CD8-positive, alpha-beta T cell (primary cell): ENCODE measurements at regions of chr17 and their contacts with region 1.

Region 1: GRCh38 chr17:16453493-16453851 is 38.1 kb downstream of the TRPV2 start:
- DNase-seq: no peak
- ATAC-seq: no peak
- H3K4me3 ChIP-seq: no peak overlapping the region
- H3K4me3 Mint-ChIP-seq: no peak overlapping the region
- H3K27ac ChIP-seq: no peak overlapping the region
- H3K27ac Mint-ChIP-seq: peak overlapping the region; percentile 55
- H3K4me1 ChIP-seq: no peaks in the 10 kb centered on the region
- H3K4me1 Mint-ChIP-seq: peaks cover 11% of the 10 kb centered on the region
- H3K27me3 ChIP-seq: no peaks in the 10 kb centered on the region
- H3K27me3 Mint-ChIP-seq: no peaks in the 10 kb centered on the region
- CTCF ChIP-seq: no peak

Region 2: DNA sequence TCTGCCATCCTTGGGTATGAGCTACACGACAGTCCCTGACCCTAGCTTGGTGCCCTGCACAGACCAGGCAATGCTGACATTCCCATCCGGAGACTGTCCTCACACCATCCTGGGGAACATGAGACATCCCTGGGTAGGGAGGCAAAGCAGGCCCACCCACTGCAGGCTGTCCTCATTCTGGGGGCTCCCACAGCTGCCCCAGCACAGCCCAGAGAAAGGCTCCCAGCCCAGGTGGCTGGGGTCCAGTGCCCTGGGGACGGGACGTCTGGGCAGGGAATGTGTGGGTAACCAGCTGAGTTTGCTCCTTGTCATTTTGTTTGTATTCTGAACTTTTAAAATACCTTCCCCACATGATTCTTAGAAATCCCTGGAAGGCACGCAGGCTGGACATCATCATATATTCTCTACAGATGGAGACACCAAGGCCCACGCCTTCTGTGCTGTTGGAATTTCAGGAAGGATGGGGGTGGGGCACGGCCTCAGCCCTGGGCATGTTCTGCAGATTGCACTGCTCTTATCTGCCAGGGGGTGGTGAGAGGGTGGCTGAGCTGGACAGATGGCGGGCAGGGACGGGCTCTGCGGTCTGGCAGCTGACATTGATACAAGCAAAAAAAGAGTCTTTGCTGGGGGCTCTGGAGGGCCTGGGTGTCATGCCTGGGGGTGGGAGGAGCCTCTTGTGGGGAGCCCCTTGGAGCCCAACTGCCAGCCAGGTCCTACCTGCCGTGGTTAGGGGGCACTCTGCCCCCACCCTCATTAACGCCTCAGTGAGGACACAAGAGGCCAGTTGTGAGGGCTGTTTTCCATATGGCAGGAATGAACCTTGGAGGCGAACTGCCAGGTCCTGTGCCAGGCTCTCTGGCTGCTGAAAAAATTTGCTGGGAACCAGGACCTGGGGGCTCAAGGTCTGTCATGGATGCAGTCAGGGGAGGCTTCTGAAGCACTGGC is 10.2 kb after region 1 on chr17:
- CTCF ChIA-PET with region 1: interaction called, 17 read pairs
- POLR2A ChIA-PET with region 1: no interaction called
- intact Hi-C with region 1: no loop called
- DNase-seq: no peak
- ATAC-seq: no peak
- H3K4me3 ChIP-seq: no peak overlapping the region
- H3K4me3 Mint-ChIP-seq: no peak overlapping the region
- H3K27ac ChIP-seq: no peak overlapping the region
- H3K27ac Mint-ChIP-seq: no peak overlapping the region
- H3K4me1 ChIP-seq: no peaks in the 10 kb centered on the region
- H3K4me1 Mint-ChIP-seq: no peaks in the 10 kb centered on the region
- H3K27me3 ChIP-seq: no peaks in the 10 kb centered on the region
- H3K27me3 Mint-ChIP-seq: no peaks in the 10 kb centered on the region
- CTCF ChIP-seq: no peak

Region 3: DNA sequence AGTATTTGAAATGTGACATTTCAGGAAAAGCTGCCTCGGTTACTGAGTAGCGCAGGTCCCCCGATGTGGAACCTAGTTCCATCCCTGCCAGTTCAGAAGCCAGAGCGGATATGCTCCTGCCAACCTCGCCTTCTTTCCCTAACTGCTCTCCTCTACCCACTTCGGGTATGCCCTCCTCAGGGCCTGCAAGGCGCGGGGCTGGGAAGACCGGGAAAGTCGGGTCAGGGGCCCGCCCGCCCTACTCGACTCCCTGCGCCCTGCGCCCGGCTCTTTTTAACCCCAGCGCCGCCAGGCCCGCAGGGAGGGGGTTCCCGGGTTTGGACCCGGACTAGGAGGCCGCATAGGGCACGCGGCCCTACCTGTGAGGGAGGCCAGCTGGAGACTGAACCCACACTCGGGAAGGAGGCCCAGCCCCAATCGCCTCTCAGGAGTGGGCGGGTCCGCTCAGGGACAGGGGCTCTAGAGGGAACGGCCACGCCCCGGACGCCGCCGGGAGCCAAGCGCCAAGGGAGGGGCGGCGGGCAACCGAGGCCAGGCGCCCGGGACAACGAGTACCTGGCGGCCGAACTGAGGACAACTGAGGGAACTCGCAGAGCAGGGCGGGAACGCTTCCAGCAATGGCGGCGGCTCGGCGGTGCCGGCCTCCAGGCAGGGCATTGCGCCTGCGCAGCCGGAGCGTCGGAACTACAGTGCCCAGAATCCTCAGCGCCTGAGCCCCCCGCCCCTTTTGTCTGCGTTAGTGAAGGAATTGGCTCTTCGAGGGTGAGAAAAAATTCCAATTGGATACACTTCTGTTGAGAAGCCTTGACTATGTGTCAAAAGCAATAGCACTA is 200.0 kb after region 1 on chr17 and contains the start of gene ZNF624:
- CTCF ChIA-PET with region 1: no interaction called
- POLR2A ChIA-PET with region 1: no interaction called
- intact Hi-C with region 1: no loop called
- DNase-seq: peak; percentile 68 to 93 (median 85)
- ATAC-seq: peak; percentile 95
- H3K4me3 ChIP-seq: peak within 1 kb of the TSS; percentile 76 to 94
- H3K4me3 Mint-ChIP-seq: peak within 1 kb of the TSS; percentile 83
- H3K27ac ChIP-seq: peak within 1 kb of the TSS; percentile 22 to 62
- H3K27ac Mint-ChIP-seq: peak within 1 kb of the TSS; percentile 79
- H3K4me1 ChIP-seq: peaks cover 13% of the 10 kb centered on the region
- H3K4me1 Mint-ChIP-seq: peaks cover 24% of the 10 kb centered on the region
- H3K27me3 ChIP-seq: no peaks in the 10 kb centered on the region
- H3K27me3 Mint-ChIP-seq: peaks cover 11% of the 10 kb centered on the region
- CTCF ChIP-seq: no peak
- total RNA-seq, gene ZNF624: 3.2 to 3.4 TPM